ENCODE measurements at regions of chr17 and their contacts with region 1.

Region 1: DNA sequence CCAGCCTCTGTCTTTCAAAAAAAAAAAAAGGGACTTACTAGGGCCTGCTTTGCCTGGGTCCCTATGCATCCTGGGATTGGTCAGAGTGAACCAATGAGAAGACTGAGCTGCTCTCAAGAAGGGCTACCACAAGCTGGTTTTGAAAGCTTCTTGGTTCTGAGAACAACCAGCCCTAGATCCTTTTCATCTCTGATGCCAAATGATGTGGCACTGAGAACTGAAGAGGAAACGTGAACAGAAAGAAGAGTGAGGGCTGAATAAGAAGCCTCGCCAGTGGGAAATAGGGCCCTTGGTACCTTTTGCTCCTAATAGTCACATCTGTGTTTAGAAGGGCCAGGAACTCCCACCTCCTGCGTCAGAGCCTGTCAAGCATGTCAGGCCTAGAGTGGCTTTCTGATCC is 10.7 kb downstream of the TACO1 start:
- DNase-seq: no peak
- H3K4me3 ChIP-seq: no peak overlapping the region
- H3K27ac ChIP-seq: no peak overlapping the region
- H3K4me1 ChIP-seq: no peaks in the 10 kb centered on the region
- H3K27me3 ChIP-seq: no peaks in the 10 kb centered on the region
- CTCF ChIP-seq: no peak

Region 2: DNA sequence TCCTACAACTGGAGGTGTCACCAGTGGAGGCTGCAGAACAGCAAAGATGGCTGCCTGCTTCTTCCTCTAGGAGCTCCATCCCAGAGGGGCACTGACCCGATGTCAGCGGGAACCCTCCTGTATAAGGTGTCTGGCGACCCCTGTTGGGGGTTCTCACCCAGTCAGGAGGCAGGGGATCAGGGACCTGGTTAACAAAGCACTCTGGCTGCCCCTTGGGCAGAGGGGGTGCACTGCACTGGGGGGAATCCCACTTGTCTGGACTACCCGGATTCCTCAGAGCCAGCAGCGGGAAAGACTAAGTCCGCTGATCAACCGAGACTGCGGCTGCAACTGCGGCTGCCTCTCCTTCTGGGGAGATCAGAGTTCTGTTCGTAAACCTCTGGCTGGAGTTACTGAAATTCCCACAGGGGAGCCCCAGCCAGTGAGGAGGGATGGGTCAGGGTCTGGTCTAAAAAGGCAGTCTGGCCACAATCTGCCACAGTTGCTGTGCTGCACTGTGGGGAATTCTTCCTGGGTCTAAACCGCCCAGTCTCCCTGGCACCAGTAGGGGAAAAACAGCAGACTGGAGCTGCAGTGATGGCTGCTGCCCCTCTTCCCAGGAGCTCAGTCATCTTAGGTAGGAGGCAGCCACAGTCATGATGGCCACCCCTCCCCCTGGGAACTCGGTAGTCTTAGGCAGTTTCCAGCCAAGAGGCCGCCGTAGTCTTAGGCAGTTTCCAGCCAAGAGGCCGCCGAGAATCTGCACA is 378.6 kb before region 1 on chr17:
- CTCF ChIA-PET with region 1: no interaction called
- dilution Hi-C with region 1: no loop called
- in situ Hi-C with region 1: no loop called
- intact Hi-C with region 1: no loop called
- DNase-seq: no peak
- H3K4me3 ChIP-seq: no peak overlapping the region
- H3K27ac ChIP-seq: no peak overlapping the region
- H3K4me1 ChIP-seq: no peaks in the 10 kb centered on the region
- H3K27me3 ChIP-seq: no peaks in the 10 kb centered on the region
- CTCF ChIP-seq: no peak

Region 3: DNA sequence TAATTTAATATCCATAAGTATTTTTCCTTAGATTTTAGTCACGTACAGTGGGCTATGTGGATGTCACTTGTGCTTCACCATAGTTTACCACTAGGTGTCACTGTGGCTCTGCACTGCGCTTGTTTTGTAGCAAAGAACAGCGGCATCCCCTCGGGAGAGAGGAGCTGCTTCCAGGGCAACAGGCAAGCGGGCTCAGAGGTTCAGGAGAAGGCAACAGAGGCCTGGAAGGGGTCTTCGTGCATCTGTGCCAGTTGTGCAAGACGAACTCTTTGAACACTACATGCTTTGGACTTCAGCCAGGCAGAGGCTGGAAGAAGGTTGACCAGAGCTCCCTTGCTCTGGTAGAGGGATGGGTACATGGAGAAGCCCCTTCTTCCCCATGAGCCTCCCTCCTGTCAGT is 185.9 kb before region 1 on chr17:
- CTCF ChIA-PET with region 1: interaction called, 4 read pairs
- dilution Hi-C with region 1: loop called (anchors 25 kb)
- in situ Hi-C with region 1: loop called (anchors 10 kb)
- intact Hi-C with region 1: loop called (anchors 1 kb)
- DNase-seq: peak; percentile 58
- H3K4me3 ChIP-seq: no peak overlapping the region
- H3K27ac ChIP-seq: no peak overlapping the region
- H3K4me1 ChIP-seq: peaks cover 18% of the 10 kb centered on the region
- H3K27me3 ChIP-seq: no peaks in the 10 kb centered on the region
- CTCF ChIP-seq: peak; percentile 88 to 98

Region 4: GRCh38 chr17:63445979-63446691 is 165.2 kb before region 1 on chr17 and contains the start of gene CYB561:
- CTCF ChIA-PET with region 1: no interaction called
- dilution Hi-C with region 1: loop called (anchors 25 kb)
- in situ Hi-C with region 1: no loop called
- intact Hi-C with region 1: loop called (anchors 1 kb)
- DNase-seq: peak; percentile 63
- H3K4me3 ChIP-seq: peak within 1 kb of the TSS; percentile 59 to 72 (median 71)
- H3K27ac ChIP-seq: peak within 1 kb of the TSS; percentile 79
- H3K4me1 ChIP-seq: peaks cover 17% of the 10 kb centered on the region
- H3K27me3 ChIP-seq: no peaks in the 10 kb centered on the region
- CTCF ChIP-seq: peak; percentile 29 to 54
- total RNA-seq, gene CYB561: 26.6 to 35.8 TPM

Region 5: DNA sequence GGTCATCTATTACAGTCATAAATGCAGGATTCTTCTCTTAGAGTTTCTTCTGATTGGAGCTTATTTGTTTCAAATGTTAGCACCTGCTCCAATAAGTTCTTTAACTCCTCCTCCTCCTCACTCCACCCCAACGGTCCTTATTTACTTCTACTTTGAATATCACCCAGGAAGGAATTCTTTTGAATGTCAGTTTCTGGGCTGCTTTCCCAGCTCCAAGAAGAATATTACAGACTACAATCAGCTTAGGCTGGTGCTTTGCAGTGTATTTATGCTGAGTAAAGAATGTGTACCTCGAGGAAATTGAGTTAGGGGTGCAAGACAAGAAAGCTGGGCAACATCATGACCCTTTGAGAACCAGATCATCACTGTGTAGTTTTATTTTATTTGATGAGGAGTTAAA is 41.7 kb after region 1 on chr17:
- CTCF ChIA-PET with region 1: no interaction called
- dilution Hi-C with region 1: no loop called
- in situ Hi-C with region 1: no loop called
- intact Hi-C with region 1: no loop called
- DNase-seq: no peak
- H3K4me3 ChIP-seq: no peak overlapping the region
- H3K27ac ChIP-seq: no peak overlapping the region
- H3K4me1 ChIP-seq: peaks cover 2% of the 10 kb centered on the region
- H3K27me3 ChIP-seq: no peaks in the 10 kb centered on the region
- CTCF ChIP-seq: no peak

Measured in mammary epithelial cell (primary cell).